Ascending aorta (tissue), 2 donors: ENCODE measurements at regions of chr14 and their contacts with region 1.

Region 1: GRCh38 chr14:59483900-59484638 is at the starts of genes JKAMP and L3HYPDH:
- DNase-seq: peak; percentile 90 to 98
- H3K4me3 ChIP-seq: peak within 1 kb of the TSS; percentile 76 to 96
- H3K27ac ChIP-seq: peak within 1 kb of the TSS; percentile 85 to 96
- H3K4me1 ChIP-seq: peaks cover 5 to 20% of the 10 kb centered on the region in 2 donors
- H3K27me3 ChIP-seq: no peaks in the 10 kb centered on the region
- CTCF ChIP-seq: peak; percentile 50 to 74 (median 70)
- total RNA-seq, gene JKAMP: 28.2 TPM
- total RNA-seq, gene L3HYPDH: 35.0 TPM

Region 2: GRCh38 chr14:59464486-59465315 is 19.4 kb before region 1 on chr14:
- intact Hi-C with region 1: loop called (anchors 1 kb)
- DNase-seq: peak in 1 of 2 donors; percentile 88
- H3K4me3 ChIP-seq: peak overlapping the region; percentile 79 to 93
- H3K27ac ChIP-seq: peak overlapping the region; percentile 79 to 93
- H3K4me1 ChIP-seq: peaks cover 0 to 10% of the 10 kb centered on the region in 2 donors
- H3K27me3 ChIP-seq: no peaks in the 10 kb centered on the region
- CTCF ChIP-seq: no peak

Region 3: GRCh38 chr14:60091550-60092530 is 607.8 kb after region 1 on chr14 and contains the start of gene PCNX4:
- intact Hi-C with region 1: loop called (anchors 5 kb)
- DNase-seq: peak; percentile 88 to 98
- H3K4me3 ChIP-seq: peak within 1 kb of the TSS; percentile 72 to 92
- H3K27ac ChIP-seq: peak within 1 kb of the TSS; percentile 95 to 96
- H3K4me1 ChIP-seq: peaks cover 0 to 11% of the 10 kb centered on the region in 2 donors
- H3K27me3 ChIP-seq: no peaks in the 10 kb centered on the region
- CTCF ChIP-seq: no peak
- total RNA-seq, gene PCNX4: 47.8 TPM

Region 4: DNA sequence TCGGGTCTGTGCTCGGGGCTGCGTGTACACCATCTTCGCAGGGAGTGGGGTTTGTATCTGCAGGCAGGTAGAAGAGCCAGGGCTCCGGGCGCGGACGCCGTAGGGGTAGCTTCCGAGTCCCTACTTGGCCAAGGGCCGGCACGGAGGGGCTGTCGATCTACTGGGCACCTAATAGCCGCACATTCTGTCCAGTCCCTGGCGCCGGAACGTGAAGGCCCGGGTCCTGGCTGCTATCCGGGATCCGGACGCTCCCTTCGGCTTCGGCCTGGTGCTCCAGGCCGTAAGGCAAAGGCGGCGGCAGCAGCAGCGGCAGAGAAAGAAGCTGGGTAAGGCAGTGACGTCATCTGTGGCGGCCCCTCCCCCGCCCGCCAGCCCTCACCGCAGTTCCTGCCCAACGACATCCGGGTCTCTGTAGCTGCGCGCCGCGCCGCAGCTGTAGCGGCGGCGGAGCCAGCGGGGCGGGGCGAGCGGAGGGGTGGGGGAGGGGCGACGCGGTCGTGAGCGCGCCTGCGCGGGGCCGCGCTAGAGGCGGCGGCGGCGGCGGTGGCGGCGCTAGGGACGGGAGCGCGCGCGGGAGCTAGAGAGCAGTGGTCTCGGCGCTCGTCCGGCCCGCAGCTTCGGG is 764.7 kb after region 1 on chr14 and contains the start of gene PPM1A:
- intact Hi-C with region 1: loop called (anchors 5 kb)
- DNase-seq: peak; percentile 75 to 97
- H3K4me3 ChIP-seq: peak within 1 kb of the TSS; percentile 92 to 98
- H3K27ac ChIP-seq: peak within 1 kb of the TSS; percentile 97 to 100
- H3K4me1 ChIP-seq: peaks cover 0 to 29% of the 10 kb centered on the region in 2 donors
- H3K27me3 ChIP-seq: no peaks in the 10 kb centered on the region
- CTCF ChIP-seq: no peak
- total RNA-seq, gene PPM1A: 25.0 TPM